Activated B cell treated with CpG ODN at 0.5 μM for 24 hours (primary cell): ENCODE measurements at regions of chr19 and their contacts with region 1.

Region 1: DNA sequence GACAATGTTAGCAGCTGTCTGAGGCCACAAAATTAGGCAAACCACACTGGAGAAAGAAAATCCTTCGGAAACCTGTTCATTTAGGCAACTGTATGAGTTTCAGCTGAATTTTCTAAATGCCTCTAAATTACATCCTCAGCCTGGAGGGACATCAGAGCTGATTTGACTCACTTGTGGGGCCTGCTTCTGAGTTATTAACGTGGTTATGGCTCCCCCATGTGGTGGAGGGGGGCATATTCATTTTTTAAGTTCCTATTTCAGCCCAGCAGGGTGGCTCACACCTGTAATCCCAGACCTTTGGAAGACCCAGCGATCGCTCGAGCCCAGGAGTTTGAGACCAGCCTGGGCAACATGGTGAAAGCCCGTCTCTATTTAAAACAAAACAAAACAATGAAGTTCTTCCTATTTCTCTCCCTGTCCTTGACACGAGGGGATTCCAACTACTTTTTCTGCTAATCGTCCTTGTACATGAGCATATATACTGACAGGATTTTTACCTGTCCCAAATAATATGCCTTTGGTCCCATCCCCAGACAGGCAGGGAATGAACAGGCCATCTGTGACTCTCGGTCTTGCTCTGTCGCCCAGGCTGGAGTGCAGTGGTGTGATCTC is 31.5 kb upstream of the HIF3A start:
- DNase-seq: peak; percentile 25
- ATAC-seq: peak; percentile 67
- H3K4me3 Mint-ChIP-seq: no peak overlapping the region
- H3K27ac Mint-ChIP-seq: no peak overlapping the region
- H3K4me1 Mint-ChIP-seq: peaks cover 9% of the 10 kb centered on the region
- H3K27me3 Mint-ChIP-seq: peaks cover 21% of the 10 kb centered on the region
- CTCF ChIP-seq: peak; percentile 41

Region 2: DNA sequence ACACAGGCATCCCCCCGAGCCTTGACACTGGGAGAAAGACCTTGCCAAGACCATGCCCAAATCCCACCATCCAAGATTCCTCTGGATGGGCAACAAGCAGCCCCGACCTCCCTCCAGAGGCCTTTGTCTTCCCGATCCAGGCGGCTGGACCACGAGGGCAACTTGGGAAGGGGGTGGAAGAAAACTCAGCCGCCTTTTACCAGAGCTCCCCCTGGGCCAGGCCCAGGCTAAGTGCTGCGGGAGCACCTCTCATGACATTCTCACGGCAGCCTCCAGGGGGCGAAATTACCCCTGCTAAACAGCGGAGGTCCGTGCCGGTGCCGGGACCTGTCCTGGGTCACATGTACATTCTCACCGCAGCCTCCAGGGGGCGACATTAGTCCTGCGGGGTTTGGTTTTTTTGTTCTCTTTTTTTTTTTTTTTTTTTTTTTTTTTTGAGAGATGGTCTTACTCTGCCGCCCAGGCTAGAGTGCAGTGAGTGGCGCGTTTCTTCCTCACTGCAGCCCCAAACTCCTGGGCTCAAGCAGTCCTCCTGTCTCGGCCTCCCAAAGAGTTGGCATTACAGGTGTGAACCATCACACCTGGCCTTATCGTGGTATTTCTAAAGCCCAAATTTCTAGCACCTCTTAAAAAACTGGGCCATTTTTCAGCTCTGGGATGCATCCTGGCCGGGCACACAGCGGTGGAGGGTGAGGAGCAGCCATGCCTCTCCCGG is 448.2 kb before region 1 on chr19:
- CTCF ChIA-PET with region 1: no interaction called
- POLR2A ChIA-PET with region 1: no interaction called
- intact Hi-C with region 1: loop called (anchors 5 kb)
- DNase-seq: peak; percentile 94
- ATAC-seq: peak; percentile 100
- H3K4me3 Mint-ChIP-seq: no peak overlapping the region
- H3K27ac Mint-ChIP-seq: peak overlapping the region; percentile 68
- H3K4me1 Mint-ChIP-seq: peaks cover 9% of the 10 kb centered on the region
- H3K27me3 Mint-ChIP-seq: no peaks in the 10 kb centered on the region
- CTCF ChIP-seq: peak; percentile 65

Region 3: GRCh38 chr19:46009530-46010510 is 255.5 kb before region 1 on chr19:
- CTCF ChIA-PET with region 1: interaction called, 3 read pairs
- POLR2A ChIA-PET with region 1: no interaction called
- intact Hi-C with region 1: loop called (anchors 5 kb)
- DNase-seq: peak; percentile 55
- ATAC-seq: peak; percentile 57
- H3K4me3 Mint-ChIP-seq: no peak overlapping the region
- H3K27ac Mint-ChIP-seq: no peak overlapping the region
- H3K4me1 Mint-ChIP-seq: peaks cover 5% of the 10 kb centered on the region
- H3K27me3 Mint-ChIP-seq: peaks cover 7% of the 10 kb centered on the region
- CTCF ChIP-seq: peak; percentile 86

Region 4: DNA sequence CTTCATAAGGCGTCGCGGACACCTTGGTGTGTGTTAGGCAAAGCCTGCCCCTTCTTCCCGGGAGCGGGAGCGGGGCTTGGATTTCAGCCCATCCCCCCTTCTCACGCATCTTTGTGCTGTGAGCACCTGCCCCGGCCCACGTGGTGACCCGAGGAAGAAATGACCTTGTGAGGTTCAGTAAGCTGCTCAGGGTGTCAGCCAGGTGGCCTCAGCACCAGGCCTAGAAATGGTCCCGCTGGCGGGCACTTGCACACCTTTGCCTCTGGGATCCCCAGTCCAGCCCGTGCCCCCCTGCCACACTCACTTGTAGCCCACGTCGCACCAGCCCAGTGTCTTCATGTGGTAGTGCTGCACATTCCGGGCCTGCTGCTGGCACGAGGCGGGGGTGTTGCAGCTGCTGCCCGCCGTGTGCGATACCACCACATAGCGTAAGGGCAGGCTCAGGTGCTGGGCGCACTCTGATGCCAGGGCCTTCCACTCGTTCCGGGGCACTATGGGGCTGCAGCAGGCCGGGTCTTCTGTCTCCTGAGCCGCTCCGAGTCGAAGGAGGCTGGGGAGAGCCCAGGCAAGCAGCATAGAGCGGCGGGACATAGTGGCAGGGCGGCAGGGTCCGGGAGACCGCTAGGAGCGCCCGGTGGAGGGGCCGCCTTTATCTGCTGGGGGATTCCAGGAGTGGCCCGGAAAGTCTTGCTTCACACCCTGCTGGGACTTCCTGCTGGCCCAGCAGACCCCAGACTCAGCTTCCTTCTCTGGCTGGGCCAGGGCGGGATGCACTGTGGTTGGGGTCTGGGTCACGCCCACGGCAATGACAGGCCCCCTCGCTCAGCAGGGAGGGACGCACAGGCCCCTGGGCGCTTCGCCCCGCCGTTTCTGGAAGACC is 242.7 kb before region 1 on chr19 and contains the start of gene PGLYRP1:
- CTCF ChIA-PET with region 1: interaction called, 71 read pairs
- POLR2A ChIA-PET with region 1: no interaction called
- intact Hi-C with region 1: no loop called
- DNase-seq: no peak
- ATAC-seq: no peak
- H3K4me3 Mint-ChIP-seq: no peak within 1 kb of the TSS
- H3K27ac Mint-ChIP-seq: no peak within 1 kb of the TSS
- H3K4me1 Mint-ChIP-seq: no peaks in the 10 kb centered on the region
- H3K27me3 Mint-ChIP-seq: peaks cover 20% of the 10 kb centered on the region
- CTCF ChIP-seq: no peak
- total RNA-seq, gene PGLYRP1: not detected in 2 replicates

Region 5: GRCh38 chr19:46030812-46031550 is 234.3 kb before region 1 on chr19:
- CTCF ChIA-PET with region 1: interaction called, 71 read pairs
- POLR2A ChIA-PET with region 1: interaction called, 10 read pairs
- intact Hi-C with region 1: no loop called
- DNase-seq: no peak
- ATAC-seq: no peak
- H3K4me3 Mint-ChIP-seq: no peak overlapping the region
- H3K27ac Mint-ChIP-seq: no peak overlapping the region
- H3K4me1 Mint-ChIP-seq: peaks cover 3% of the 10 kb centered on the region
- H3K27me3 Mint-ChIP-seq: peaks cover 17% of the 10 kb centered on the region
- CTCF ChIP-seq: no peak

Region 6: DNA sequence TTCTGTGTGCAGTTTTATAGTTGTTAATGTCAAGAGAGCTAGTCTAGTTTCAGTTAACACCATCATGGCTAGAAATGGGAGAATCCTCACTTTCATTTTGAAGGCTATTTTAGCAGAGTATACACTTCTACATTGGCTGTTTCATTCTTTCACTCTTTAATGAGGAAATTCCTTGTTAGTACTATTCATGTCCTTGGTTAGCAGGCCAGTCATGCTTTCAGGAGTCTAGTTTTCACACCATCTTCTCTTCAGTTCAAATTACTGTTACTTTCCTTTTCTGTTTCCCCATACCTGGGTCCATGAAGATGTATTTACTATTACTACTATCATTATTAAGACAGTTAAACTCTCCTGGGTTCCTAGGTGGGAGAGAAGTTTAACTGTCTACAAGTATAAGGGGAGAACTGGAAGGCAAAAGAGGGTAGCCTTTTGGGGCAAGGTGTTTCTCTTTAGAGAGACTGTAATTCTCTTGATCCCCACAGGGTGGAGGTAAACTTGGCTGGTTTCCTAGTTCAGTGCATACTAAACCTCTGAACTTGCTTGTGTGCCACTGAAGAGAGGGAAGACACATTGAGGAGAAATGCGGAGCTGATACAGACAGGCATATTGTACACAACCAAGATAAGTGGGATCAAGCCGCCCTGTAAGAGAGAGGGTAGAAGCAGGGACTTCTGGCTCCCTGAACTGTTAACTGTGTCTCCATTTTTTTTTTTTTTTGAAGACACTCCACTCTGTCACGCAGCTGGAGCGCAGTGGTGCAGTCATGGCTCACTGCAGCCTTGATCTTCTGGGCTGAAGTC is 183.2 kb before region 1 on chr19:
- CTCF ChIA-PET with region 1: interaction called, 8 read pairs
- POLR2A ChIA-PET with region 1: no interaction called
- intact Hi-C with region 1: loop called (anchors 1 kb)
- DNase-seq: no peak
- ATAC-seq: no peak
- H3K4me3 Mint-ChIP-seq: no peak overlapping the region
- H3K27ac Mint-ChIP-seq: no peak overlapping the region
- H3K4me1 Mint-ChIP-seq: no peaks in the 10 kb centered on the region
- H3K27me3 Mint-ChIP-seq: peaks cover 55% of the 10 kb centered on the region
- CTCF ChIP-seq: no peak

Region 7: GRCh38 chr19:46186101-46187100 is 78.9 kb before region 1 on chr19:
- CTCF ChIA-PET with region 1: interaction called, 4 read pairs
- POLR2A ChIA-PET with region 1: no interaction called
- intact Hi-C with region 1: loop called (anchors 1 kb)
- DNase-seq: no peak
- ATAC-seq: no peak
- H3K4me3 Mint-ChIP-seq: no peak overlapping the region
- H3K27ac Mint-ChIP-seq: no peak overlapping the region
- H3K4me1 Mint-ChIP-seq: peaks cover 20% of the 10 kb centered on the region
- H3K27me3 Mint-ChIP-seq: peaks cover 42% of the 10 kb centered on the region
- CTCF ChIP-seq: no peak

Region 8: DNA sequence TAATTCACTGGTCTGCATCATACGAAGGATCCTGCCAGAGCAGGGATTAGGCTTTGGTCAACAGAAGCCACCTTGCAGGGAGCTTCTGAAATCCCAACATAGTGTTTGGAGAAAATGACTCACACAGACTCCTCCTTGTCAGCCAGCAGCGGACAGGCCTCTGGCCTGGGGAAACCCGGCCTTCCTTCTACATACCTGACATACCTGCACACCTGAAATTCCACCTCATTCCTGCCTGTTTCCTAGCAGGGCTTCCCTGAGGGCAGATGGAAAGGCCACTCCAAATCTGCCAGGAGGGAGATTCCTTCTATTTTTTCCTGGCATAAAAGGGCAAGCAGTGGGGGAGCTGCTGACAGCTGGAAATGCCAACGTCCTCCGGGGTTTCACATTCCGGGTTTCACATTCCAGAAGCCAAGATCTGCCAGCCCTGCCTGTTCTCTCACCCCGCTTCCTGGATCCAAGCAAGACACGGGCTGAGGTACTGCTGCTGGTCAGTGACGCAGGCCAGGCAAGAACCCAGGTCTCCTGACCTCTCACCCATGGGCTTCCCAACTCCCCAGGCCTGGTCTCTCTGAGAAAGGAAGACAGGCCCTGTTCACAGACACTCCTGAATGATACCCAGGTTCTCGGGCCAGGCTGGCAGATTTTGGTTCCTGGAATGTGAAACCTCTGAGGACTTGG is 54.0 kb before region 1 on chr19:
- CTCF ChIA-PET with region 1: no interaction called
- POLR2A ChIA-PET with region 1: no interaction called
- intact Hi-C with region 1: no loop called
- DNase-seq: no peak
- ATAC-seq: no peak
- H3K4me3 Mint-ChIP-seq: no peak overlapping the region
- H3K27ac Mint-ChIP-seq: no peak overlapping the region
- H3K4me1 Mint-ChIP-seq: no peaks in the 10 kb centered on the region
- H3K27me3 Mint-ChIP-seq: peaks cover 33% of the 10 kb centered on the region
- CTCF ChIP-seq: no peak

Region 9: GRCh38 chr19:46254776-46255175 is 10.5 kb before region 1 on chr19:
- CTCF ChIA-PET with region 1: no interaction called
- POLR2A ChIA-PET with region 1: no interaction called
- intact Hi-C with region 1: no loop called
- DNase-seq: no peak
- ATAC-seq: no peak
- H3K4me3 Mint-ChIP-seq: no peak overlapping the region
- H3K27ac Mint-ChIP-seq: no peak overlapping the region
- H3K4me1 Mint-ChIP-seq: no peaks in the 10 kb centered on the region
- H3K27me3 Mint-ChIP-seq: peaks cover 29% of the 10 kb centered on the region
- CTCF ChIP-seq: no peak